GM10248 (cell line): ENCODE measurements at regions of chr3 and their contacts with region 1.

Region 1: DNA sequence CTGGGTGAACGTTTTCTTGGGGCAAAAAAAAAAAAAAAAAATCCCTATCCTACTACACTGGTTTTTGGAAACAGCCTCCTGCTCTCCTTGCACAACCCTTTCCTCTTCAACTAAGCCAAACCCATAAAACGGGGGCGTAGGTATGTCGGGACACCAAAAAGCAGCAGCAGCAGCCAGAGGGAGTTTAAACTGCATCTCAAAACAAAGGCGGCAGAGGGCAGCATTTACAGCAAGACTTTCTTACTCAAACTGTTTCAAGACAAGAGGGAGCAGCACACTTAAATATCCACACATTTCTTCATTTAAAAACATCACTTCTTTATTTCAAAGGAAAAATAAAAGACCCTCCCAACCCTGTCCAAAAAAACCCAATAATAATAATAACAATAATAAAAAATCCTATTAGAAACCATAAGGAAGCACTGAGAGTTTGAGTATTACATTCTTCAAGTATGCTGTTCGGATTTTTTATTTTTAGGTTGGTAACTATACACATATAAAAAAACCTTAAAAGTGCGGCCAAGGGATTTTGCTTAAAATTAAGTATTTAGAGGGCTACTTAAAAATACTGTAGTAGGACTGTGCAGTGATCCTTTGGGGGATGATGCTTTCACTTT is 43.9 kb upstream of the PLXND1 start:
- DNase-seq: peak; percentile 60
- CTCF ChIP-seq: peak; percentile 66

Region 2: GRCh38 chr3:129627429-129628168 is 22.8 kb before region 1 on chr3:
- CTCF ChIA-PET with region 1: interaction called, 11 read pairs
- POLR2A ChIA-PET with region 1: no interaction called
- DNase-seq: peak; percentile 85
- CTCF ChIP-seq: peak; percentile 90